Panc1 (cell line): ENCODE measurements at regions of chr5 and their contacts with region 1.

Region 1: GRCh38 chr5:172973127-172973916 is 10.2 kb upstream of the ATP6V0E1 start:
- DNase-seq: no peak
- ATAC-seq: no peak
- H3K4me3 ChIP-seq: no peak overlapping the region
- H3K27ac ChIP-seq: no peak overlapping the region
- H3K4me1 ChIP-seq: no peaks in the 10 kb centered on the region
- H3K27me3 ChIP-seq: no peaks in the 10 kb centered on the region
- CTCF ChIP-seq: no peak

Region 2: GRCh38 chr5:172758083-172758833 is 215.1 kb before region 1 on chr5:
- CTCF ChIA-PET with region 1: no interaction called
- POLR2A ChIA-PET with region 1: no interaction called
- in situ Hi-C with region 1: no loop called
- intact Hi-C with region 1: no loop called
- DNase-seq: no peak
- ATAC-seq: peak; percentile 81
- H3K4me3 ChIP-seq: no peak overlapping the region
- H3K27ac ChIP-seq: peak overlapping the region; percentile 44; the same call in 1 of the 2 replicates
- H3K4me1 ChIP-seq: peaks cover 7% of the 10 kb centered on the region
- H3K27me3 ChIP-seq: no peaks in the 10 kb centered on the region
- CTCF ChIP-seq: no peak

Region 3: DNA sequence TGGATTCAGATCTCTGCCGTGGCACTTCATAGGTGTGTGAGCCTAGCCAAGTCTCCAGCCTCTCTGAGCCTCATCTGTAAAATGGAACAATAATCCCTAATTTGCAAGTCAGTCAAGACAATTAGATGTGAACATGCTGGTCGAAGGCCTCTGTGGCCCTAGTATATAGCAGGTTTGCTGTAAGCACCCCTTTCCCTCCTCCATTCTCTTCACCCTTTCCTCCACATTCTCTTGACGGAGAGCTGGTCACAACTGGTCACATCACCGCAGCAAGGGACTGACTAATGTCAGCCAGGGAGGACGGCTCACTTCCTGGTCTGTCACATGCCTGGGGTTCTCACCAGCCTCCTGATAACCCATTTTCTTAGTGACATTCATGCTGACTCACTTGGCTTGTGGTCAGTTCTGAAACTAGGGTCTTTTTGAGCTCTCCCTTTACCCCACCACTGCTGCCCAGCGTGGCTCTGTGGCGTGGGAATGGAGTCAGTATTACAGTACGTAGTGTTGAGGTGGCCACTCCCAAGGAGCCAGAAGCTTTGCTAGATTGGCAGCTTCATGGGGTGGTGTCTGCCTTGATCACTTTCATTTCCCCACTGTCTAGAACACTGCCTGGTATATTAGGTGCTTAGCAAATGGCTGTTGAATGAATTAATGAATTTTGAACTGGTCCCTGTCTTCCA is 91.5 kb before region 1 on chr5:
- CTCF ChIA-PET with region 1: no interaction called
- POLR2A ChIA-PET with region 1: no interaction called
- in situ Hi-C with region 1: no loop called
- intact Hi-C with region 1: no loop called
- DNase-seq: no peak
- ATAC-seq: peak; percentile 68
- H3K4me3 ChIP-seq: no peak overlapping the region
- H3K27ac ChIP-seq: peak overlapping the region; percentile 62
- H3K4me1 ChIP-seq: peaks cover 25% of the 10 kb centered on the region
- H3K27me3 ChIP-seq: no peaks in the 10 kb centered on the region
- CTCF ChIP-seq: no peak

Region 4: DNA sequence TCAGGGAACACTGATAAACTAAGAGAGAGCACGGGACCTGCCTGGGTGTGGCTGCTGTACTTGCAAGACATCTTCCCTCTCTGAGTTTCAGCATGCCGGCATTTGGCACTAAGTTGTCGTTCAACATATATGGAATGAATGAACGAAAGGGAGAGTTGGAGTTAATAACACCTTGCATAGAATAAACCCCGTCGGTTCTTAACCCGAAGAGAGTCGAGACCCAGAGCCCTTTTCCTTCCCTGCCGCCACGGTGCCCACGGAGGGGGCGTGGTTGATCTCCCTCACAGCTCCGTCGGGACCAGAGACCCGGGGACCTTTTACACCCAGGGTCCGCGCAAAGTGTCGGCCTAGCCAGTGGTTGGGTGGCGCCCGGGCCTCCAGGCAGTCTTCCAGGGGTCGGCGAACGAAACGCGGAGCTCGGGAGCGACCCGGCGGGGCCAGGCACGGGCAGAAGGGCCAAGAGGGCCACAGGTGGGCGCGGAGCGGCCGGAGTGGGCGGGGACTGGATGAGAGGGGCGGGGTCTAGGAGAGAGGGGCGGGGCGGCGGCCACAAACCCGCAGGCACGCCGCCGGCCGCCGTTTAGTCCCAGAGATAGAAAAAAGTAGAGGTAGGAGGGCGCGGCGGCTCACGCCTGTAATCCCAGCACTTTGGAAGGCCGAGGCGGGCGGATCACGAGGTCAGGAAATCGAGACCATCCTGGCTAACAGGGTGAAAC is 14.8 kb before region 1 on chr5:
- CTCF ChIA-PET with region 1: no interaction called
- POLR2A ChIA-PET with region 1: interaction called, 13 read pairs
- in situ Hi-C with region 1: no loop called
- intact Hi-C with region 1: no loop called
- DNase-seq: no peak
- ATAC-seq: peak; percentile 86
- H3K4me3 ChIP-seq: peak overlapping the region; percentile 82 to 85
- H3K27ac ChIP-seq: peak overlapping the region; percentile 82
- H3K4me1 ChIP-seq: peaks cover 18% of the 10 kb centered on the region
- H3K27me3 ChIP-seq: no peaks in the 10 kb centered on the region
- CTCF ChIP-seq: no peak

Region 5: DNA sequence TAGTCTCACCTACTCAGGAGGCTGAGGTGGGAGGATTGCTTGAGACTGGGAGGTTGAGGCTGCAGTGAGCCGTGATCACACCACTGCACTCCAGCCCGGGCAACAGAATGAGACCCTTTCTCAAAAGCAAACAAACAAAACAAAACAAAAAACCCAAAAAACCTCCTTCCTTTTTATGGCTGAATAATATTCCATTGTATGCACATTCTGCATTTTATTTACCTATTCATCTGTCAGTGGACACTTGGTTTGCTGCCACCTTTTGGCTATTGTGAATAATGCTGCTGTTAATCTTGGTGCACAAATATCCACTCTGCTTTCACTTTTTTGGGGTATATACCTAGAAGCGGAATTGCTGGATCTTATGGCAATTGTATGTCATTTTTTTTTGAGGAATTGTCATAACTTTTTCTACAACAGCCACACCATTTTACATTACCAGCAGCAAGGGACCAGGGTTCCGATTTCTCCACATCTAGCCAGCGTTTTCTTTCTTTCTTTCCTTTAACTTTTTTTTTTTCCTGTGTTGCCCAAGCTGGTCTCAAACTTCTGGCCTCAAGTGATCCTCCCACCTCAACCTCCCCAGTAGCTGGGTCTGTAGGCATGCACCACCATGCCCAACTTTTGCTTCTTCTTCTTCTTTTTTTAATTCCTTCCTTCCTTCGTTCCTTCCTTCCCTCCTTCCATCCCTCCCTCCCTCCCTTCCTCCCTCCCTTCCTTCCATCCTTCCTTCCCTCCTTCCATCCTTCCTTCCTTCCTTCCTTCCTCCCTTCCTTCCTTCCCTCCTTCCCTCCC is 231.1 kb after region 1 on chr5:
- CTCF ChIA-PET with region 1: no interaction called
- POLR2A ChIA-PET with region 1: no interaction called
- in situ Hi-C with region 1: no loop called
- intact Hi-C with region 1: loop called (anchors 10 kb)
- DNase-seq: peak; percentile 25
- ATAC-seq: no peak
- H3K4me3 ChIP-seq: no peak overlapping the region
- H3K27ac ChIP-seq: no peak overlapping the region
- H3K4me1 ChIP-seq: peaks cover 9% of the 10 kb centered on the region
- H3K27me3 ChIP-seq: no peaks in the 10 kb centered on the region
- CTCF ChIP-seq: peak; percentile 76